A673 (cell line): ENCODE measurements at regions of chr2 and their contacts with region 1.

Region 1: DNA sequence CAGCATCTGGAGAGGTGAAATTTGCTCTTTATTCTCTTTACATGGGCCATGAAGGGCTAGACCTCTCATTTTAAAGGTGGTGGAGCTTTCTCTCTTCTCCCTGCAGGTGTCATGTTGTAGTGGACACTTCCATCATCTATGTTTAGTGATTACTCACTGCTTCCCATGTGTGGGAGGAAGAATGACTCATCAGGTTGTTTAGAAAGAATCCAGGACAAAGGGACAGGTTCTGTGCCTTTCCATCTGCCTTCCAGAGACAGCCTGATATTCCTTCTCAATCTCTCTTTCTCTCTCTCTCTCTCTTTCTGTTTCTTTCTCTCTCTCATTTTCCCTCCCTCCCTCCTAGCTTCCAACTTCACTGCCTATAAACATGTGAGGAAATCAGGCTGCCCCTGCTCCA is 38.7 kb downstream of the SCG2 start:
- DNase-seq: peak; percentile 73
- H3K4me3 ChIP-seq: no peak overlapping the region
- H3K27ac ChIP-seq: peak overlapping the region; percentile 11
- H3K4me1 ChIP-seq: peaks cover 21% of the 10 kb centered on the region
- H3K27me3 ChIP-seq: no peaks in the 10 kb centered on the region
- CTCF ChIP-seq: no peak

Region 2: DNA sequence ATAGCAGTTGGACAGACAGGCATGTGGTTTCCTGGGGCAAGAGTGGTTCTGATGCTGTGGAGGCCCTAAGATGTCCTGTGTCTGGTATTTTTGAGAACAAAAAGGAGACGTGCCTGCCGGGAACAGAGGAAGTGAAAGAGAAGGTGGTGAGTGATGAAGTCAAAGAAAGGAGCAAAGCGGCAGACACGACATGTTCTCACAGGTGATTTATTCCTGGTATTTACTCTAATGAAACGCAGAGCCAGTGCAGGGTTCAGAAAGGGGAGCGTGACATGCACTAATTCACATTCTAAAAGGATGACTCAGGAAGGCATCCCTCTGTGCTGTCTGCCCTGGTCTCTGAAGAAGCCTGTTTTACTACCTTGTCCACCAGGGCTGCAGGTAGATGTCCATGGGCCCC is 300.5 kb before region 1 on chr2:
- CTCF ChIA-PET with region 1: no interaction called
- POLR2A ChIA-PET with region 1: no interaction called
- intact Hi-C with region 1: no loop called
- DNase-seq: peak; percentile 18
- H3K4me3 ChIP-seq: no peak overlapping the region
- H3K27ac ChIP-seq: no peak overlapping the region
- H3K4me1 ChIP-seq: no peaks in the 10 kb centered on the region
- H3K27me3 ChIP-seq: no peaks in the 10 kb centered on the region
- CTCF ChIP-seq: no peak

Region 3: GRCh38 chr2:223414646-223415045 is 148.8 kb before region 1 on chr2:
- CTCF ChIA-PET with region 1: interaction called, 17 read pairs
- POLR2A ChIA-PET with region 1: no interaction called
- intact Hi-C with region 1: no loop called
- DNase-seq: no peak
- H3K4me3 ChIP-seq: no peak overlapping the region
- H3K27ac ChIP-seq: no peak overlapping the region
- H3K4me1 ChIP-seq: peaks cover 10% of the 10 kb centered on the region
- H3K27me3 ChIP-seq: no peaks in the 10 kb centered on the region
- CTCF ChIP-seq: no peak

Region 4: GRCh38 chr2:223896833-223897311 is 333.4 kb after region 1 on chr2:
- CTCF ChIA-PET with region 1: no interaction called
- POLR2A ChIA-PET with region 1: no interaction called
- intact Hi-C with region 1: no loop called
- DNase-seq: no peak
- H3K4me3 ChIP-seq: no peak overlapping the region
- H3K27ac ChIP-seq: no peak overlapping the region
- H3K4me1 ChIP-seq: no peaks in the 10 kb centered on the region
- H3K27me3 ChIP-seq: no peaks in the 10 kb centered on the region
- CTCF ChIP-seq: no peak